Esophagus muscularis mucosa (tissue), 4 donors: ENCODE measurements at regions of chr2 and their contacts with region 1.

Region 1: DNA sequence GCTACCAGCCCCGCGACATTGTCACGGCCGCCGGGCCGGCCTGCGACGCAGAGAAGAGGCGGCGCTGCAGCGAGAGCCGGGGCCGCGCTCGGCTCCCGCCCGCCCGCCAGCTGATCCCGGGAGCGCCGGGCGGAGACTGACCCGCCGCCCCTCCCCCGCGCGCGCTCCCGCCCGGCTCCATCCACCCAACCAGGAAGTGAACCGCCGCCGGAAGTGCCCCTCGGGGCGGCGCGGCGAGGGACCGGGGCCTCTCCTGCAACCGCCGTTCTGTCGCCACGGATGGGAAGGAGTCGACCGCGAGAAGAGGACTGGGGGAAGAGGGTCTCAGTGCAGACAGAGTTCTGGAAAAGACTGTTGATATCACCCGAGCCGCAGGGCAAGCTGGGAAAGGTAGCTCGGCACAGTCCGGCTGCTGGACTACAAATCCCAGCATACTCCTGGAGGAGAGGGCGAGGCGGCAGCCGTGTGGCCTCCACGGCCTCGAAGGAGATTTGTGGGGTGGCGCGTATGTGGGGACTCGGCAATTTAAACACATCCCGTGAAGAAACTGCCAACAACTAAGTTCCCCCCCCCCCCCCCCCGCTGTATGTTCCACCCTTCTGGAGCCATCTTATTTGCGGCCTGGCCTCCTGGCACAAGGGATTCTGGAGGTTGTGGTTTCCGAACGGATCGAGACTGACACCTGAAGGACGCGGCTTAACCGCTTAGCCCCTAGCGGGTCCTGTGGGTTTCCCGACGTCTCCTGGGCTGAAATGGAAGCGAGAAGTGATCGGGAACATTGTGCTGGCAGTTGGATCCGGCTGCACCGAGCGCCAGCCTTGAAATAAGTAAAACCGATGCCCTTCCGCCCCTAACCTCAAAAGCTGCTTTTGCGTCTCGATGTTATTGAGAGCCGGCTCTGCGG is at the start of gene AAK1:
- DNase-seq: peak; percentile 96
- H3K4me3 ChIP-seq: peak within 1 kb of the TSS; percentile 85 to 100 (median 98)
- H3K27ac ChIP-seq: peak within 1 kb of the TSS; percentile 94 to 97 (median 96)
- H3K4me1 ChIP-seq: peaks cover 35 to 61% (median 55%) of the 10 kb centered on the region in 4 donors
- H3K27me3 ChIP-seq: no peaks in the 10 kb centered on the region
- CTCF ChIP-seq: no peak
- EP300 ChIP-seq: no peak
- POLR2A ChIP-seq: peak; percentile 53
- total RNA-seq, gene AAK1: 27.8 to 53.2 (median 41.9) TPM

Region 2: GRCh38 chr2:69386789-69387734 is 256.8 kb before region 1 on chr2 and contains the start of gene GFPT1:
- intact Hi-C with region 1: loop called (anchors 10 kb)
- DNase-seq: peak; percentile 97
- H3K4me3 ChIP-seq: peak within 1 kb of the TSS; percentile 83 to 97 (median 92)
- H3K27ac ChIP-seq: peak within 1 kb of the TSS; percentile 85 to 91 (median 86)
- H3K4me1 ChIP-seq: peaks cover 15 to 45% (median 42%) of the 10 kb centered on the region in 4 donors
- H3K27me3 ChIP-seq: no peaks in the 10 kb centered on the region
- CTCF ChIP-seq: peak in 1 of 3 experiments; percentile 5
- EP300 ChIP-seq: no peak
- POLR2A ChIP-seq: peak; percentile 32
- total RNA-seq, gene GFPT1: 17.4 to 25.3 (median 23.2) TPM

Region 3: GRCh38 chr2:69436938-69437750 is 206.7 kb before region 1 on chr2 and contains the start of gene NFU1:
- intact Hi-C with region 1: loop called (anchors 5 kb)
- DNase-seq: peak; percentile 98
- H3K4me3 ChIP-seq: peak within 1 kb of the TSS; percentile 74 to 98 (median 83)
- H3K27ac ChIP-seq: peak within 1 kb of the TSS; percentile 90 to 97 (median 96)
- H3K4me1 ChIP-seq: peaks cover 16 to 52% (median 36%) of the 10 kb centered on the region in 4 donors
- H3K27me3 ChIP-seq: no peaks in the 10 kb centered on the region
- CTCF ChIP-seq: peak; percentile 74 to 76 (median 74)
- EP300 ChIP-seq: no peak
- POLR2A ChIP-seq: peak; percentile 55
- total RNA-seq, gene NFU1: 45.4 to 74.8 (median 48.8) TPM

Region 4: GRCh38 chr2:69559442-69560146 is 84.3 kb before region 1 on chr2:
- intact Hi-C with region 1: loop called (anchors 5 kb)
- DNase-seq: no peak
- H3K4me3 ChIP-seq: no peak overlapping the region
- H3K27ac ChIP-seq: no peak overlapping the region
- H3K4me1 ChIP-seq: peaks cover 17 to 35% (median 20%) of the 10 kb centered on the region in 4 donors
- H3K27me3 ChIP-seq: no peaks in the 10 kb centered on the region
- CTCF ChIP-seq: peak; percentile 47 to 59 (median 58)
- EP300 ChIP-seq: no peak
- POLR2A ChIP-seq: no peak

Region 5: DNA sequence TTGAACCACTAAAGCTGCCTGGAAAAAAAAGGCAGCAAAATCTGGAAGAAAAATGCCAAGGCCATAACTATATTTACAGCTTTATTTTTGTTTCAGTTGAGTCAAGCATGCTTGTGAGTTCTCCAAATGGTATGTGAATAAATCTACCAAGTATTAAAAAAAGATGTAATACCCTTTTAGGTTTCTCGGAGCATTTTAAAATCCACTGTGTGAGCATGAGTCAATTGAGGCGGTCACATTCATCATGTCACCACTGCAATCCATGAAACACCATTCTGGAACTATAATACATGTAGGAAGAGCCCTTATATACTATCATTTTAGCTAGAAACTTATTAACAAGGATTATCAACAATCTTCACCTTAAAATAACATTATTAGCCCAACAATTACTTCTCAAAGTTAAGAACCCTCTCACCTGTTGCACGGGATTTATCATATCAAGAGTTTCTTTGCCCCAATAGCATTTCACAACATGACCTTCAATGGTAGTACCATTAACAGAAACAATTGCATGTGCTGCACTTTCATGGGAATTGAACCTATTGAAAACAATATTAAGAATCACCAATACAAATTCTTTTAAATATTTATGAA is 571.2 kb after region 1 on chr2:
- intact Hi-C with region 1: no loop called
- DNase-seq: no peak
- H3K4me3 ChIP-seq: no peak overlapping the region
- H3K27ac ChIP-seq: no peak overlapping the region
- H3K4me1 ChIP-seq: no peaks in the 10 kb centered on the region
- H3K27me3 ChIP-seq: no peaks in the 10 kb centered on the region
- CTCF ChIP-seq: no peak
- EP300 ChIP-seq: no peak
- POLR2A ChIP-seq: no peak